ENCODE measurements at regions of chr3 and their contacts with region 1.

Region 1: GRCh38 chr3:9422712-9423424 is 25.5 kb downstream of the SETD5 start:
- DNase-seq: peak; percentile 91
- ATAC-seq: peak; percentile 88
- H3K4me3 ChIP-seq: no peak overlapping the region; a peak in 1 of 4 replicates
- H3K27ac ChIP-seq: peak overlapping the region; percentile 65
- H3K4me1 ChIP-seq: peaks cover 43 to 45% of the 10 kb centered on the region in 2 experiments
- H3K27me3 ChIP-seq: no peaks in the 10 kb centered on the region
- CTCF ChIP-seq: peak; percentile 15 to 71 (median 58); a peak in 5 of 6 replicates
- POLR2A ChIP-seq: no peak
- RAD21 ChIP-seq: peak; percentile 60

Region 2: GRCh38 chr3:9352917-9353752 is 69.7 kb before region 1 on chr3:
- CTCF ChIA-PET with region 1: interaction called, 6 read pairs
- POLR2A ChIA-PET with region 1: interaction called, 3 read pairs
- RAD21 ChIA-PET with region 1: no interaction called
- intact Hi-C with region 1: loop called (anchors 2 kb)
- DNase-seq: peak; percentile 21
- ATAC-seq: peak; percentile 88
- H3K4me3 ChIP-seq: no peak overlapping the region
- H3K27ac ChIP-seq: no peak overlapping the region
- H3K4me1 ChIP-seq: peaks cover 17 to 29% of the 10 kb centered on the region in 2 experiments; a peak in 3 of 4 replicates
- H3K27me3 ChIP-seq: no peaks in the 10 kb centered on the region
- CTCF ChIP-seq: peak; percentile 68 to 95 (median 86); a peak in 5 of 6 replicates
- POLR2A ChIP-seq: no peak
- RAD21 ChIP-seq: peak; percentile 93

Region 3: DNA sequence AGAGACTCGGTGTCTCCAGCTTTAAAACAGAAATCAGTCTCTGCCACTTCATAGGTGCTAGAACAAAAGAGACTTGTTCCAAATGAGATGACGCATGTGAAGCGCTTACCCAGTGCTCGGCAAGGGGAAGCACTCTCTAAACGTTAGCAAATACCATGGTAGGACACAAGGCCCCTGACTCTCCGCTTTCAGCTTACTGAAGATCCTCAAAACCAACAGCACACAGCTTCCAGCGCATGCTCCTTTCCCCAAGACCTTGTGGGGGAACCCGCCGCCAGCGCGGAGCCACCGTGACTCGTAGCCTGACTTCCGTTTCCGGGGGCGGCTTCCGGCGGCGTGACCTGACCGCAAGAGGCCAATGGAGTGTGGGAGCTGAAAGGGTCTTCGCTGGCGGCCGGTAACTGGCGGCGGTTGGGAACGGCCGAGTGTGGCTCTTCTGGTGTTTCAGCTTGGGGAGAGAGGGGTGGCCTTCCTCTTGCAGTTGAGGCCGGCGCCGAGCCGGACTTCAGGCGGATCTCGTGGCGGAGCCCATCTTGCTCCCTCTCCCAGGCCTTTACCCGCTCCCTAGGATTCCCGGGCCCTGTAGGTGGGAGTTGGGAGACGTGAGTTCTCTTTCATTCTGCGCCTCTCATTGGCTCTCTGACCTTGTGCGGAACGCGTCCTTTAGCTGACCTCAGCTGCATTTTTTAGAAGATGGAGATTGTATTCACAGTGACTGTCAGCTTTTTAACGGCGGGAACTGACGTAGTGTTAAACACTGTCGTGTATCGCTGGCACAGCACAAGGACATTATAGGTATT is 59.9 kb before region 1 on chr3 and contains the start of gene THUMPD3:
- CTCF ChIA-PET with region 1: no interaction called
- POLR2A ChIA-PET with region 1: interaction called, 4 read pairs
- RAD21 ChIA-PET with region 1: no interaction called
- intact Hi-C with region 1: loop called (anchors 2 kb)
- DNase-seq: peak; percentile 82
- ATAC-seq: peak; percentile 94
- H3K4me3 ChIP-seq: peak within 1 kb of the TSS; percentile 74 to 83
- H3K27ac ChIP-seq: peak within 1 kb of the TSS; percentile 94
- H3K4me1 ChIP-seq: peaks cover 4 to 13% of the 10 kb centered on the region in 2 experiments; a peak in 3 of 4 replicates
- H3K27me3 ChIP-seq: no peaks in the 10 kb centered on the region
- CTCF ChIP-seq: no peak
- POLR2A ChIP-seq: peak; percentile 93
- RAD21 ChIP-seq: no peak
- total RNA-seq, gene THUMPD3: 79.5 TPM

Region 4: GRCh38 chr3:9384141-9384853 is 38.6 kb before region 1 on chr3:
- CTCF ChIA-PET with region 1: no interaction called
- POLR2A ChIA-PET with region 1: no interaction called
- RAD21 ChIA-PET with region 1: no interaction called
- intact Hi-C with region 1: loop called (anchors 5 kb)
- DNase-seq: no peak
- ATAC-seq: no peak
- H3K4me3 ChIP-seq: no peak overlapping the region
- H3K27ac ChIP-seq: no peak overlapping the region
- H3K4me1 ChIP-seq: no peaks in the 10 kb centered on the region
- H3K27me3 ChIP-seq: no peaks in the 10 kb centered on the region
- CTCF ChIP-seq: no peak
- POLR2A ChIP-seq: no peak
- RAD21 ChIP-seq: no peak

Region 5: DNA sequence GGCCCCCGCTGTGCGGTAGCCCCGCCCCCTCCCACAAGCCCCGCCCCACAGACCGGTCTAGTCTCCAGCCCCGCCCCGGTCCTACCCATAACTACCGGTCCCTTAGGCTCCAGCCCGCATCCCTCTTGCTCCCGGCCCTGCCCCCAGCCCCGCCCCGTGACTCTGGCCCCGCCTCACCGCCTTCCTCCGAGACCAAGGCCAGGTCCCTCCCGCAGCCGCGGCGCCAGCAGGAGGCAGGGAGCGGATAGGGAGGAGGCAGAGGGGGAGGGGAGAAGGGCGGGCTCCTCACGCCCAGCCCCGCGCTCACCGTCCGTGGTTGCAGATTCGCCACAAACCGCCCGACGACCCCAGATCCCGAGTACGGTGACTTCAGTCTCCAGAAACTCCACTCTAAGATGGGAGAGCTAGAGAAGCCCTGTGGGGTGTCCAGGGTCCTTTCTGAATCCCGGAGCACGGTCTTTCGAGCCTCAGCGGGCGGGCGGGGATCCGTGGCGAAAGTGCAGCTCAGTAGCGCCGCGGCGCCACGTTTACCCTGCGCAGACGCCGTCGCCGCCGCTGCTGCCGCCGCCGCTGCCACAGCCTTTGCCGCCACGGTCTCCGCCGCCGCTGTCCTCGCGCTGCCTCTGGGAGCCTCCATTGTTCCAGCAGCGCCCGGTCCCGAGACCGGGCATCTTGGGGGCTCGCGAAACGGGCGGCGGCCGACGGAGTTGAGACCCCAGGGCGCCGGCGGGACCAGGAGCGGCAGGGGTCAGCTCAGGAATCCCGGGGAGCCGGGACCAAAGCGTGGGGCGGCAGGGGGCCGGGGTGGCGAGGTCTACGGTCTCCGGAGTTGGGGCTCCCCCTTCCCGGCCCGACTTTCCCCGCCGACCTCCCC is 308.6 kb after region 1 on chr3 and contains the start of gene BRPF1:
- CTCF ChIA-PET with region 1: no interaction called
- POLR2A ChIA-PET with region 1: no interaction called
- RAD21 ChIA-PET with region 1: no interaction called
- intact Hi-C with region 1: no loop called
- DNase-seq: peak; percentile 98
- ATAC-seq: peak; percentile 96
- H3K4me3 ChIP-seq: peak within 1 kb of the TSS; percentile 95
- H3K27ac ChIP-seq: peak within 1 kb of the TSS; percentile 98
- H3K4me1 ChIP-seq: peaks cover 19 to 40% of the 10 kb centered on the region in 2 experiments; a peak in 3 of 4 replicates
- H3K27me3 ChIP-seq: no peaks in the 10 kb centered on the region
- CTCF ChIP-seq: 0 out of 6 replicates have a peak, but pooled peaks of 1 of the 3 experiments have one; percentile 3
- POLR2A ChIP-seq: peak; percentile 53
- RAD21 ChIP-seq: no peak
- total RNA-seq, gene BRPF1: 23.6 TPM